Heart right ventricle (tissue), 16 donors: ENCODE measurements at regions of chr22 and their contacts with region 1.

Region 1: GRCh38 chr22:50507991-50508884 is at the start of gene NCAPH2:
- DNase-seq: peak; percentile 95 to 97
- ATAC-seq: peak; percentile 74 to 88 (median 84)
- H3K4me3 ChIP-seq: peak within 1 kb of the TSS; percentile 75 to 100 (median 94)
- H3K27ac ChIP-seq: peak within 1 kb of the TSS; percentile 64 to 97 (median 94)
- H3K4me1 ChIP-seq: peaks cover 13 to 33% (median 27%) of the 10 kb centered on the region in 9 donors
- H3K27me3 ChIP-seq: no peaks in the 10 kb centered on the region
- CTCF ChIP-seq: peak in 1 of 9 donors; percentile 10
- total RNA-seq, gene NCAPH2: 21.7 to 31.9 (median 26.2) TPM

Region 2: DNA sequence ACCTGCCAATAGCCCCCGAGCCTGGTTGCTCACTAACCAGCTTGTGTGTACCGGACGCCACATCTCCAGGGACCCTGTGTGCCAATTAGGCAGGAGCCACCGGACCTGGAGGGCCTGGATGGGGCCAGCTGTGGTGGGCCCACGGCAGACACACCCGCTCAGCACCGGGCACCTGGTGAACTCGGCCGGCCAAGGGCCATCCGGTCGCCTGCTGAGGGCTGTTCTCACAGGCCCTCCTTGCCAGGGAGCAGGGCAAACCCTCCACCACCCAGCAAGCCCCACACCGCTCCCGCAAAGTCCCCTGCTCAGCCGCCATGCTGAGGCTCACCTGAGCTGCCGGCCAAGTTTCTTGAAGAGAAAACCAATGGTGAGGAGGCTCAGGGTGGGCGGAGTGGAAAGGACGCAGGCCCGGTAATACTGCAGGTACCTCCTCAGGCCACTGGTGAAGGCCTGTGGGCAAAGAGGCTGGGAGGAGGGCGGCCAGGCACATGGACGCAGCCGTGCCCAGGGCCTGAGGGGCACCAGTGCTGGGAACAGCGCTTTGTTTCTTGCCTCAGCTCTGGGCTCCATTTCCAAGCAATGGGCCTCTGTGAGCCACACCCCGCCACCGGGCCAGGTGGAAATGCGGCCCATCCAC is 280.5 kb before region 1 on chr22:
- intact Hi-C with region 1: no loop called
- DNase-seq: no peak
- ATAC-seq: no peak
- H3K4me3 ChIP-seq: no peak overlapping the region
- H3K27ac ChIP-seq: no peak overlapping the region
- H3K4me1 ChIP-seq: no peaks in the 10 kb centered on the region
- H3K27me3 ChIP-seq: no peaks in the 10 kb centered on the region
- CTCF ChIP-seq: no peak

Region 3: GRCh38 chr22:50244420-50245213 is 263.6 kb before region 1 on chr22 and contains the start of gene TUBGCP6:
- intact Hi-C with region 1: loop called in 4 of 10 experiments (anchors 10 kb)
- DNase-seq: peak; percentile 95
- ATAC-seq: peak; percentile 90 to 96 (median 94)
- H3K4me3 ChIP-seq: peak within 1 kb of the TSS; percentile 68 to 100 (median 77)
- H3K27ac ChIP-seq: peak within 1 kb of the TSS; percentile 28 to 96 (median 86)
- H3K4me1 ChIP-seq: peaks cover 34 to 65% (median 51%) of the 10 kb centered on the region in 9 donors
- H3K27me3 ChIP-seq: no peaks in the 10 kb centered on the region
- CTCF ChIP-seq: peak in 3 of 9 donors; percentile 40 to 41 (median 40)
- total RNA-seq, gene TUBGCP6: 15.5 to 23.3 (median 18.5) TPM

Region 4: GRCh38 chr22:50456466-50457234 is 51.6 kb before region 1 on chr22:
- intact Hi-C with region 1: no loop called
- DNase-seq: no peak
- ATAC-seq: no peak
- H3K4me3 ChIP-seq: no peak overlapping the region
- H3K27ac ChIP-seq: no peak overlapping the region
- H3K4me1 ChIP-seq: no peaks in the 10 kb centered on the region
- H3K27me3 ChIP-seq: no peaks in the 10 kb centered on the region
- CTCF ChIP-seq: no peak

Region 5: GRCh38 chr22:50474668-50475492 is 33.4 kb before region 1 on chr22 and contains the start of gene SBF1:
- intact Hi-C with region 1: loop called in 3 of 10 experiments (anchors 1 to 2 kb)
- DNase-seq: peak; percentile 92 to 94
- ATAC-seq: peak; percentile 94 to 99 (median 98)
- H3K4me3 ChIP-seq: peak within 1 kb of the TSS; percentile 72 to 98 (median 84)
- H3K27ac ChIP-seq: peak within 1 kb of the TSS in 9 of 10 donors; percentile 68 to 90 (median 80)
- H3K4me1 ChIP-seq: peaks cover 30 to 49% (median 47%) of the 10 kb centered on the region in 9 donors
- H3K27me3 ChIP-seq: peaks cover 0 to 15% (median 11%) of the 10 kb centered on the region in 7 donors
- CTCF ChIP-seq: no peak
- total RNA-seq, gene SBF1: 41.0 to 73.0 (median 49.7) TPM

Region 6: GRCh38 chr22:50576070-50576469 is 67.8 kb after region 1 on chr22:
- intact Hi-C with region 1: no loop called
- DNase-seq: no peak
- ATAC-seq: peak in 5 of 8 donors; percentile 17 to 47 (median 32)
- H3K4me3 ChIP-seq: peak overlapping the region in 3 of 10 donors; percentile 57 to 62 (median 59)
- H3K27ac ChIP-seq: peak overlapping the region in 5 of 10 donors; percentile 5 to 100 (median 30)
- H3K4me1 ChIP-seq: peaks cover 5 to 60% (median 38%) of the 10 kb centered on the region in 9 donors
- H3K27me3 ChIP-seq: no peaks in the 10 kb centered on the region
- CTCF ChIP-seq: peak in 7 of 9 donors; percentile 11 to 60 (median 46)

Region 7: DNA sequence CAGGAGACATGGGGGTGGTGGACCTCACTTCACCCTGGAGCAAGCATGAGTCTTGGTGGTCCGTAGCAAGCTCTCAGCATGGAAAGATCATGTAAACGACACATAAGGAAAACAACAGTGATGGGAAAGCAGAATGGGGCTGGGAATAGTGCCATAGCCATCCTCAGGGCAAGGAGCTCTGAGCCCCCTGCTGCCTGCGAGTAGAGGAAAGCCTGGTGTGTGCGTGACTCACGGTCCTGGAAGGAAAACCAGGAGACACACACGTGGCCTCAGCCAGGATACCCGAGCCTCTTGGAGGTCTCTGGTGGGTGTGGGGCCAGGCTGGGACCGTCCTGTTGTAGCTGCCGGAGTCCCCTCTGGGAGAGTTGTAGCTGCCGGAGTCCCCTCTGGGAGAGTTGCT is 176.7 kb after region 1 on chr22:
- intact Hi-C with region 1: no loop called
- DNase-seq: no peak
- ATAC-seq: peak in 6 of 8 donors; percentile 20 to 59 (median 48)
- H3K4me3 ChIP-seq: peak overlapping the region in 8 of 10 donors; percentile 4 to 36 (median 28)
- H3K27ac ChIP-seq: peak overlapping the region in 4 of 10 donors; percentile 24 to 54 (median 38)
- H3K4me1 ChIP-seq: peaks cover 5 to 36% (median 16%) of the 10 kb centered on the region in 9 donors
- H3K27me3 ChIP-seq: peaks cover 0 to 29% (median 4%) of the 10 kb centered on the region in 7 donors
- CTCF ChIP-seq: no peak